Panc1 (cell line): ENCODE measurements at regions of chr1 and their contacts with region 1.

Region 1: DNA sequence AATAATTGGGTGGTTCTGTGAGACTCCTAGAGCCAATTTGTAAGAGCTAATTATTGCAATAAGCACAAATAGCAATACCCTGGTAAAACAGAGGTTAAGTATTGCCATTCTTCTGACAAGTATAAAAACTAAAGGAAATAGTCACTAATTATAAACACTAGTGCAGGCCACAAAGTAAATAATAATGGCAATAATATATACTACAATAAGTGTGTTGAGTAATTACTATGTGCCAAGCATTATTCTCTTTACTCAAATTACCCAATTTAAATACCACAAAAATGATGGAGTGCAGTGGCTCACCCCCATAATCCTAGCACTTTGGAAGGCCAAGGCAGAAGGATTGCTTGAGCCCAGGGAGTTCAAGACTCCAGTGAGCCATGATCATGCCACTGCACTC is 15.3 kb downstream of the ZMYM6 start:
- DNase-seq: no peak
- ATAC-seq: no peak
- H3K4me3 ChIP-seq: no peak overlapping the region
- H3K27ac ChIP-seq: no peak overlapping the region
- H3K4me1 ChIP-seq: no peaks in the 10 kb centered on the region
- H3K27me3 ChIP-seq: no peaks in the 10 kb centered on the region
- CTCF ChIP-seq: no peak

Region 2: GRCh38 chr1:35047188-35047858 is 30.9 kb after region 1 on chr1:
- CTCF ChIA-PET with region 1: no interaction called
- POLR2A ChIA-PET with region 1: interaction called, 15 read pairs
- in situ Hi-C with region 1: no loop called
- intact Hi-C with region 1: no loop called
- DNase-seq: no peak
- ATAC-seq: peak; percentile 62; the same call in 1 of the 2 replicates
- H3K4me3 ChIP-seq: no peak overlapping the region
- H3K27ac ChIP-seq: no peak overlapping the region
- H3K4me1 ChIP-seq: no peaks in the 10 kb centered on the region
- H3K27me3 ChIP-seq: peaks cover 3% of the 10 kb centered on the region; the same call in 1 of the 2 replicates
- CTCF ChIP-seq: no peak